Gastrocnemius medialis (tissue), 4 donors: ENCODE measurements at regions of chr7 and their contacts with region 1.

Region 1: DNA sequence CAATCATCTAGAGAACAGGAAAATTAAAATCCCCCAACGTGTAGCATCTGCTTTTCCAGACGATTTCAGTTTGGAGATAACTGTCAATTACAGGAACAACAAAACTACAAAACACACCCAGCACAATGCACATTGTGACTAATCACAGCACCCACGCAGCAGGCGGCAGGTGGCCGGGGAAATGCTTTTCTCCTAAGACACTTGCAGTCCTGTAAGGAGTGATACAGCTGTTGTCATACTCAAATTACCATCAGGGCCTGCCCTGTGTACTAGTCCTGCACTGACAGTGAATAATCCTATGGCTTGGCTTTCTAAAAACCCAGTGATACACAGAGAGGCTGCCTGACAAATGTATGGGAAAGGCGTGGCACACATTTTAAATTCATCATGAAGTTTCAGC is 37.8 kb downstream of the COBL start:
- DNase-seq: peak; percentile 81 to 88
- ATAC-seq: peak; percentile 65 to 70
- H3K4me3 ChIP-seq: peak overlapping the region; percentile 32 to 46 (median 40)
- H3K27ac ChIP-seq: peak overlapping the region; percentile 92 to 97 (median 94)
- H3K4me1 ChIP-seq: peaks cover 56 to 65% of the 10 kb centered on the region in 2 donors
- H3K27me3 ChIP-seq: no peaks in the 10 kb centered on the region
- CTCF ChIP-seq: no peak
- POLR2A ChIP-seq: no peak

Region 2: GRCh38 chr7:51067757-51068156 is 211.0 kb before region 1 on chr7:
- in situ Hi-C with region 1: no loop called
- intact Hi-C with region 1: no loop called
- DNase-seq: peak in 1 of 2 donors; percentile 36
- ATAC-seq: peak; percentile 57 to 58
- H3K4me3 ChIP-seq: no peak overlapping the region
- H3K27ac ChIP-seq: no peak overlapping the region
- H3K4me1 ChIP-seq: peaks cover 6 to 8% of the 10 kb centered on the region in 2 donors
- H3K27me3 ChIP-seq: no peaks in the 10 kb centered on the region
- CTCF ChIP-seq: peak; percentile 58 to 77 (median 72)
- POLR2A ChIP-seq: no peak

Region 3: GRCh38 chr7:51186201-51186930 is 92.4 kb before region 1 on chr7:
- in situ Hi-C with region 1: no loop called
- intact Hi-C with region 1: no loop called
- DNase-seq: peak; percentile 50 to 67
- ATAC-seq: peak; percentile 95
- H3K4me3 ChIP-seq: no peak overlapping the region
- H3K27ac ChIP-seq: peak overlapping the region in 3 of 4 donors; percentile 22 to 62 (median 60)
- H3K4me1 ChIP-seq: peaks cover 8 to 12% of the 10 kb centered on the region in 2 donors
- H3K27me3 ChIP-seq: no peaks in the 10 kb centered on the region
- CTCF ChIP-seq: no peak
- POLR2A ChIP-seq: no peak

Region 4: GRCh38 chr7:51234139-51234538 is 44.7 kb before region 1 on chr7:
- in situ Hi-C with region 1: no loop called
- intact Hi-C with region 1: loop called (anchors 2 kb)
- DNase-seq: peak; percentile 97 to 98
- ATAC-seq: peak; percentile 94 to 97
- H3K4me3 ChIP-seq: no peak overlapping the region
- H3K27ac ChIP-seq: peak overlapping the region; percentile 83 to 91 (median 88)
- H3K4me1 ChIP-seq: peaks cover 30 to 33% of the 10 kb centered on the region in 2 donors
- H3K27me3 ChIP-seq: no peaks in the 10 kb centered on the region
- CTCF ChIP-seq: no peak
- POLR2A ChIP-seq: peak in 1 of 2 donors; percentile 43

Region 5: GRCh38 chr7:51315393-51316261 is 36.8 kb after region 1 on chr7:
- in situ Hi-C with region 1: no loop called
- intact Hi-C with region 1: loop called (anchors 2 kb)
- DNase-seq: peak; percentile 26 to 48
- ATAC-seq: peak; percentile 58 to 61
- H3K4me3 ChIP-seq: peak overlapping the region; percentile 76 to 91 (median 82)
- H3K27ac ChIP-seq: peak overlapping the region; percentile 81 to 95 (median 92)
- H3K4me1 ChIP-seq: peaks cover 16 to 19% of the 10 kb centered on the region in 2 donors
- H3K27me3 ChIP-seq: no peaks in the 10 kb centered on the region
- CTCF ChIP-seq: no peak
- POLR2A ChIP-seq: peak; percentile 26 to 49